ENCODE measurements at regions of chr17 and their contacts with region 1.

Region 1: DNA sequence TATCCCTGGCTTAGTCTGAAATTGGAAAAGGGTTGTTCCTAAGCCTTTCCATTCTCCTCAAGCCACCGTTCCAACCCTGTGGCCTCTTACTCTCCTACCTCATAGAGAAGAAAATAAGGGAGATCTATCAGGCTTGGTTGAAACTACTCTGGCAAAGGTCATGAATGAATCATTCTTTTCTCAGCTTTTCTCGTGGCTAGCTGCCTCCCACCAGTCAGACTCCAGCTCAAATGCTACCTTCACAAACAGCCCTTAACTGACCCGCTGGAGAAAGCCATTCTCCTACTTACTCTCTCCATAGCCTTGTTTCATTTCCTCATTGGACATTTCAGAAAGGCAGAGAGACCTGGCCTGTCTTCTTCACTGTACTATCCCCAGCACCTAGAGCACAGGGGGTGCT is 8.9 kb downstream of the MYH10 start:
- DNase-seq: peak in 1 of 2 donors; percentile 66
- H3K4me3 ChIP-seq: peak overlapping the region; percentile 25 to 90
- H3K27ac ChIP-seq: peak overlapping the region; percentile 93 to 98
- H3K4me1 ChIP-seq: peaks cover 7 to 40% of the 10 kb centered on the region in 2 donors
- H3K27me3 ChIP-seq: no peaks in the 10 kb centered on the region
- CTCF ChIP-seq: no peak

Region 2: DNA sequence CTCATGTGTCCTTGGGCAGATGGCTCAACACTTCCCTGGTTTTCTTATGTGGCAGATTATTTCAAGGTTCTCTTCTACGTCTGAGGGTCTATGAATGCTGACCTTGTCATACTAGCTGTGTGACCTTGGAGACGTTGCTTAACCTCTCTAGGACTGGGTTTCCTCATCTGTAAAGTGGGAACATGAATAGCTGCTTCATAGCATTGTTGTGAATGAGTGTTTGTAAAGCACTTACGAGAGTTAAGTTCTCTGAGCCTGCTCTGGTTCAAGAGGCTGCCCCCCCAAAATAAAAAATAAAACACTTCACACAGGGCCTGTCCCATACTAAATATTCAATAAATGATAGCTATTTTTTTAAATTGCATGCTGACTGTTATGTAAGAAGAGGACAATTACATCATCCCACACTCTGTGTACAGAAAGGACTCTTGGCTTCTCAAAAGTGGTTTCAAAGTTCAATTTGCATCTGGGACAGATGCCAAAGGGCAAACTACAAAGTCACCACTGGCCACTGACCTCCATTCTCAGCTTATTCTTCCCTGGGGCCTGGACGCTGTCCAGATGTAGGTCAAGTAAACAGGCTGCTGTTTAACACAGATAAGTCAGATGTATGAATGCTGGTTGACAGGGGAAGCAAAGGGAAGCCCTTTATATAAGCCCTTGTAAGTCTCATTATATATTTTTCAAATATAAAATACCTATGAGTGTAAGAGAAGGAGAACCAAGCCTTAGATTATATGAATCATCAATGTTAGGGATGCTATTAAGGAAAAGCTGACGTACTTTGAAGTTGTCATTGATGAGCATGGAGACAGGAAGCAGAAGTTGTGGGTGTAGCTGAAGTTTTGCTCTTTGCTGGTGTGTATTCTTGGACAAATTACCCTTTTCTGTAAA is 201.3 kb before region 1 on chr17:
- intact Hi-C with region 1: no loop called
- DNase-seq: peak in 1 of 2 donors; percentile 62
- H3K4me3 ChIP-seq: no peak overlapping the region
- H3K27ac ChIP-seq: no peak overlapping the region
- H3K4me1 ChIP-seq: no peaks in the 10 kb centered on the region
- H3K27me3 ChIP-seq: no peaks in the 10 kb centered on the region
- CTCF ChIP-seq: no peak

Region 3: GRCh38 chr17:8470447-8471047 is 151.0 kb before region 1 on chr17:
- intact Hi-C with region 1: loop called (anchors 5 kb)
- DNase-seq: no peak
- H3K4me3 ChIP-seq: no peak overlapping the region
- H3K27ac ChIP-seq: peak overlapping the region; percentile 76 to 82
- H3K4me1 ChIP-seq: peaks cover 4 to 66% of the 10 kb centered on the region in 2 donors
- H3K27me3 ChIP-seq: no peaks in the 10 kb centered on the region
- CTCF ChIP-seq: no peak

Region 4: GRCh38 chr17:8585911-8586310 is 35.7 kb before region 1 on chr17:
- intact Hi-C with region 1: loop called (anchors 5 kb)
- DNase-seq: no peak
- H3K4me3 ChIP-seq: no peak overlapping the region
- H3K27ac ChIP-seq: peak overlapping the region; percentile 57 to 83
- H3K4me1 ChIP-seq: peaks cover 7 to 73% of the 10 kb centered on the region in 2 donors
- H3K27me3 ChIP-seq: no peaks in the 10 kb centered on the region
- CTCF ChIP-seq: no peak

Region 5: GRCh38 chr17:8832711-8833352 is 211.2 kb after region 1 on chr17:
- intact Hi-C with region 1: no loop called
- DNase-seq: no peak
- H3K4me3 ChIP-seq: no peak overlapping the region
- H3K27ac ChIP-seq: no peak overlapping the region
- H3K4me1 ChIP-seq: no peaks in the 10 kb centered on the region
- H3K27me3 ChIP-seq: peaks cover 5% of the 10 kb centered on the region
- CTCF ChIP-seq: peak; percentile 4 to 35 (median 8)